ENCODE measurements at regions of chr4 and their contacts with region 1.

Region 1: DNA sequence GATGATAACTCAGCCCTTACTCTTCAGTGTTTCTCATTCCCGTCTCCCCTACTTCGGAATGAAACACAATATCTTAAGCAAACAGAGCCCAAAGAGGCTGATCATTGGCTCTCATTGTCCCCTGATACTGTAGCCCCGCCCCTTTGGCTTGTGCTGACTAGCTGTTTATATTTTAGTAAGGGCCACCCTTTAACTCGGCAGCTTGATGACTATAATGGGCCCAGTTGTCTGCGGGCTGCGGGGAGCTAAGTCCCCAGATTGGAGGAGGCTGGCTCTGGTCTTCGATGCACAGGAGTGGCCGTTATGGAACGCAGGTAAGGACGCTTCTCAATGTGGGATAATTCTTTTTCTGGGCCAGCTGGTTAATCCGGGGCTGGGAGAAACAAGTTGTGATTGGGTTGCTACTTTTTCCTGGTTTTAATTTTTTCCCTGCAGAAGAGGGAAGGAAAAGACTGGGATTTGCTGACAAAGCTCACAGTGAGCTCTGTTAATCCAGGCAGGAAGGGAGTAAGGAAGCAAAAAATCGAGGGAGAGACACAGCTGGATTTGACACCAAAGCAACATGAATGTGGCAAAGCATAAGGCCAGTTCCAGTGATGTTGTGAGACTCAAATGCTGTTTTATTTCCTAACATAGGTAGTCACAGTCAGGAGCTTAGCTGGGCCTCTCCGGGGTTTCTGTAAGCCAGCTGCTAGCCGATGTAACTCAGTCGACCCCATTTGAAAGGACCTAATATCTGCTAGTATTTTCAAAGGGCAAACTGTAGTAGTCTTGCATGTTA is at the start of gene TRIM2:
- DNase-seq: no peak
- H3K4me3 ChIP-seq: peak within 1 kb of the TSS in 1 of 2 donors; percentile 39
- H3K4me3 Mint-ChIP-seq: peak within 1 kb of the TSS; percentile 73 to 87 (median 82)
- H3K27ac ChIP-seq: peak within 1 kb of the TSS; percentile 37
- H3K27ac Mint-ChIP-seq: peak within 1 kb of the TSS; percentile 68 to 94 (median 89)
- H3K4me1 ChIP-seq: peaks cover 41% of the 10 kb centered on the region
- H3K4me1 Mint-ChIP-seq: peaks cover 23 to 48% (median 37%) of the 10 kb centered on the region in 4 donors
- H3K27me3 ChIP-seq: no peaks in the 10 kb centered on the region
- H3K27me3 Mint-ChIP-seq: no peaks in the 10 kb centered on the region
- total RNA-seq, gene TRIM2: 11.9 to 12.3 TPM

Region 2: DNA sequence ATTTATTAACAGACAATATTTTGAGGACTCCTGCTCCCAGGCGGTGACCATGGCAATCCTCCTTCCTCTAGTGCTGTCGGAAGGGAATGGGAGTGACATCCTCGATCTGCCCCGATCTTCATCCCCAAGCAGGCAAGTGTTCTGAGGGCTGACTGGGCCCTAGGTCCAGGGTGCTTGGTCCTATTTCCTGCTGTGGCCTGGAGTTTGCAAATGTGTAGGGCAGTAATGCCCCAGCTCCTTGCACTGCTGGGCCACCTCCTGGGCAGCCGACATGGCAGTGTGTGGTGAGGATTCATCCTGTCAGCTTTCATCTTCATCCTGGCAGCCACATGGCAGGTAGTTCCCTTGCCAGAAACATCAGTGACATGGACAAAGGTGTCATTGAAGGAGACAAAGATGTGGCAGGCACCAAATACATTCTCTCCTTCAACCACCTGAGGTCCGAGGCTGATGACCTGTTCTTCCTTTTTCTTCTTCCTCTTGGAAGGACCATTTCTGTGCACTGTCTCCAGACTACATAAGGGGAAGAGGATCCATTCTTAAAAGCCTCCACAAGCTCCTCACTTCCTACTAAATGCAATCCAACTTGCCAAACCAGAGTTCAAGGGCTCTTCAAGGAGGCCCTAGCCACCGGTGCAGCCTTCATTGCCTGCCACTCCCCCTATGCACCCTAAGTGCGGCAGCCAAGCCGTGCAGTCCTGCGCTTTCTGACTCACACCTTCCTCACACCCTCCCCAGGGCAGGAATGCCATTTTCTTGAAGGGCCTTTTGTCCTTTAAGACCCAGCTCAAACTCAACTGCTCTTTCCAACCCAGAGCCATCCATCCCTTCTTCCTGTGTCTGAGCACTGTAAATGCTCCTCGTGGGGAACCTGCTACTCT is 590.4 kb before region 1 on chr4:
- CTCF ChIA-PET with region 1: no interaction called
- POLR2A ChIA-PET with region 1: no interaction called
- intact Hi-C with region 1: no loop called
- DNase-seq: no peak
- H3K4me3 ChIP-seq: no peak overlapping the region
- H3K4me3 Mint-ChIP-seq: no peak overlapping the region
- H3K27ac ChIP-seq: no peak overlapping the region
- H3K27ac Mint-ChIP-seq: no peak overlapping the region
- H3K4me1 ChIP-seq: no peaks in the 10 kb centered on the region
- H3K4me1 Mint-ChIP-seq: peaks cover 0 to 8% (median under 1%) of the 10 kb centered on the region in 4 donors
- H3K27me3 ChIP-seq: no peaks in the 10 kb centered on the region
- H3K27me3 Mint-ChIP-seq: peaks cover 2 to 8% of the 10 kb centered on the region in 2 donors

Region 3: DNA sequence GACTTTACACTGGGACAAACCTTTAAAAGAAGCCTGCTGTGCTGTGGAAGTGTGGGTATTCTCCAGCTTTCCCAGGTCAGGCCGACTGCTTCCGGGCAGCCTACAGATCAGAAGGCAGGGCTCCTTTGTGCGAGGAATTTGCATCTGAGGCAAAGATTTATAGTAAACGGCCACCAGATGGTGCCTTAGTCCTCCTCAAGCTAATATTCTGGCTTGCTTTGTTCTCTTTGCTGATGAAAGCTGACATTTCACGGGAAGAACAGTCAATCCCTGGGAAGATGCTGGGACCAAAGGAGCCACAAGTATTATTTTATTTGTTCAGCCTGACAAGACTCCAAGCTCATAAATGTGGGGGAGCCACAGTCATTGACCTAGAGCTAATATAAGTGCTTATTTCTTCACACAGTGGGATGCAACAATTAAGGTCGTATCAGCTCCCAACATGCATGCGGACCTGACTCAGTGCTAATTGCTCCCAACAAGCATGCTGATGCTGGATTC is 120.9 kb before region 1 on chr4:
- CTCF ChIA-PET with region 1: no interaction called
- POLR2A ChIA-PET with region 1: no interaction called
- intact Hi-C with region 1: no loop called
- DNase-seq: peak; percentile 41 to 62 (median 56)
- H3K4me3 ChIP-seq: no peak overlapping the region
- H3K4me3 Mint-ChIP-seq: peak overlapping the region in 6 of 8 donors; percentile 1 to 83 (median 64)
- H3K27ac ChIP-seq: no peak overlapping the region
- H3K27ac Mint-ChIP-seq: peak overlapping the region in 5 of 7 donors; percentile 52 to 88 (median 65)
- H3K4me1 ChIP-seq: peaks cover 57% of the 10 kb centered on the region
- H3K4me1 Mint-ChIP-seq: peaks cover 30 to 56% (median 43%) of the 10 kb centered on the region in 4 donors
- H3K27me3 ChIP-seq: no peaks in the 10 kb centered on the region
- H3K27me3 Mint-ChIP-seq: peaks cover 0 to 3% of the 10 kb centered on the region in 2 donors

Region 4: DNA sequence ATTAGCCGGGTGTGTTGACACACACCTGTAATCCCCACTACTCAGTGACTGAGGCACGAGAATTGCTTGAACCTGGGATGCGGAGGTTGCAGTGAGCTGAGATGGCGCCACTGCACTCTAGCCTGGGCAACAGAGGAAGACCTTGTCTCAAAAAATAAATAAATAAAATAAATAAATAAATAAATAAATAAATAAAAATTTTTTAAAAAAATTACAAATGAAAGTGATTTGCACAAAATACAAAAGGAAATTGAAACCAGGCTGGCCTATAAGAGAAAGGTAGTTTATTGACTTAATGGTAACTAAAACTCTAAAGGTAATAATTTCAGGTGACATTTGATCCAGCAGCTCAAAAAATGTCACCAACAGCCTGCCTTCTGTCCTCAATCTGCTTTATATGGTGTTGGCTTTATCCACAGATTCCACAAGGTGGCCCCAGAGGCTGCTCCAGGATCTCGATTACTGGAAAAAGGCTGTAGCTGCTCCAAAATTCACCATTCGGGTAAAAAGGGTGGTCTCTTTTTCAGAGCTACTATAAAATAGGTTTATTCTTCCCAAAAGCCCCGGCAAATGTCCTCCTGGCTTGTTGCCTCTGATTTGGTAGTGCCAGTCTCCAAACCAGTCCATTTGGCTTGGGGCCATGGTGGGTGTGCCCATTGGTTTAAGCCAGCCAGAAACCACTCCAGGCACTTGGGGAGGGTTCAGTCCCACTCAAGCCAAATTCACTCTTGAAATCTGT is 61.6 kb before region 1 on chr4:
- CTCF ChIA-PET with region 1: interaction called, 3 read pairs
- POLR2A ChIA-PET with region 1: no interaction called
- intact Hi-C with region 1: loop called (anchors 1 kb)
- DNase-seq: peak; percentile 63 to 68 (median 64)
- H3K4me3 ChIP-seq: no peak overlapping the region
- H3K4me3 Mint-ChIP-seq: no peak overlapping the region
- H3K27ac ChIP-seq: no peak overlapping the region
- H3K27ac Mint-ChIP-seq: no peak overlapping the region
- H3K4me1 ChIP-seq: peaks cover 4% of the 10 kb centered on the region
- H3K4me1 Mint-ChIP-seq: peaks cover 0 to 12% (median 5%) of the 10 kb centered on the region in 4 donors
- H3K27me3 ChIP-seq: no peaks in the 10 kb centered on the region
- H3K27me3 Mint-ChIP-seq: no peaks in the 10 kb centered on the region

Region 5: DNA sequence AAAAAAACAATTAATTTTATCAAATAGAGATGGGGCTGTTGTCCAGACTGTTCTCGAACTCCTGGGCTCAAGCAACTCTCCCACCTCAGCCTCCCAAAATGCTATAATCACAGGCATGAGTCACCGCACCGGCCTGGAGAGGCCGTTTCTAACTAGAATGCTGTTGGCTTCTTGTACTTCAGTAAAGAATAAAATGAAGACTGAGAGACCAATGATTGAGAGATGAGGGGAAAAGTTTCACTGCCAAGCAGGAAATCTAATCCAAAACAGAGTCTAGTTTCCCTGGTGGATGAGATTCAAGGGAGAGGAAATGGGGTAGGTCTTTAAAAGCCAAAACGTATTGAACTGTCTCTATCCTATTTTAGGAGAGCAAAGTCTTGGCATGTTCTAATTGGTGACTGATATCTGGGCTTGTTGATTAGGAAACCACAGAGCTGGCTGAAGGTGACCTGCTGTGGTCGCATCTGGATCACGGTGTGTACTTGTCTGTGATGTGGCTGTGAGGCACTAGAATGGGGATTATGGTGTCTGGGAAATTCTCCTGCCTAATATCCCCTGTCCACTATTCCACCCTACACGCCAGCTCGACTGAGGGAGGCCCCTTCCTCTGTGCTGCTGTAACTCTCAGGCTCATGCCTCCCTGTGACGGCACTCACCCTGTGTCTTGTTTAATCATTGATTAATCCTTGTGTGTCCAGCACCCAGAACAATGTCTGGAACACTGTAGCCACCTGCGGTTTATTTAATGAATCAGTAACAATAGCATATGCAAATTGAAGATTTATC is 15.2 kb before region 1 on chr4:
- CTCF ChIA-PET with region 1: no interaction called
- POLR2A ChIA-PET with region 1: no interaction called
- intact Hi-C with region 1: no loop called
- DNase-seq: no peak
- H3K4me3 ChIP-seq: no peak overlapping the region
- H3K4me3 Mint-ChIP-seq: no peak overlapping the region
- H3K27ac ChIP-seq: no peak overlapping the region
- H3K27ac Mint-ChIP-seq: peak overlapping the region in 2 of 7 donors; percentile 22 to 38
- H3K4me1 ChIP-seq: no peaks in the 10 kb centered on the region
- H3K4me1 Mint-ChIP-seq: peaks cover 0 to 3% (median under 1%) of the 10 kb centered on the region in 4 donors
- H3K27me3 ChIP-seq: no peaks in the 10 kb centered on the region
- H3K27me3 Mint-ChIP-seq: no peaks in the 10 kb centered on the region

Region 6: DNA sequence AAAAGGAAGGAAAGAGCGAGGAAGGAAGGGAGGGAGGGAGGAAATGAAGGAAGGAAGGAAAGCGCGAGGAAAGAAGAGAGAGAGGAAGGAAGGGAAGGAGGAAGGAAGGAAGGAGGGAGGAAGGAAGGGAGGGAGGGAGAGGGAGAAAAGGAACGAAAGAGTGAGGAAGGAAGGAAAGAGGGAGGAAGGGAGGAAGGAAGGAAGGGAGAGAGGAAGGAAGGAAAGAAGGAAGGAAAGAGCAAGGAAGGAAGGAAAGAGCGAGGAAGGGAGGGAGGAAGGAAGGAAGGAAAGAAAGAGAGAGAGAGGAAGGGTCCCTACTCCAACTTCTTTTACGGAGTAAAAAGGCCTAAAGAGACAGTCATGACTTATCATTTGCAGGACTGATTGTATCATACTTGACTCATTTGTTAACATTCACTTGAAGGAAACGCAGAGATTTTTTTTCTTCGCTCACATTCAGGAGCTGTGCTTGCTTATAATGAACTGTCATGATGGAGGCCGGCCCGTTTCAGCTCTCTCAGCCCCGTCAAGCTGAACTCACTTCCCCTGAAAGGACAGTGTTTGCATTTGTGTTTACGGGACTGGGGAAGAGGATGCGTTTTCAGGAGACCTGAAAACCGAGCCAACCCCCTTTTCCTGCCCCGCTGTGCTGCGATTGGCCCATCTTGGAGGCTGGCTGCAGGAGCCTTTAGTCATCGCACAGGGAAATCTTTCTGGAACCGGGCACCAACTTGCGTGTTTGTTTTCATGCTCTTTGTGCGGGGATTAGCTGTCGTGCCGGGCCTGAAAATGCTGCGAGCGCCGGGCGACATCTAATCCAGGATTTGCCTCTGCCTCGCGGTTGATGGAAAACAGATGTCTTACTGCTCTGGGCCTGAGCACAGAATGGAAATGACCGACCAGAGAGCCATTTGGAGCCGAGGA is 17.6 kb after region 1 on chr4:
- CTCF ChIA-PET with region 1: interaction called, 3 read pairs
- POLR2A ChIA-PET with region 1: interaction called, 5 read pairs
- intact Hi-C with region 1: loop called (anchors 1 kb)
- DNase-seq: peak; percentile 19 to 49 (median 41)
- H3K4me3 ChIP-seq: peak overlapping the region; percentile 24 to 62
- H3K4me3 Mint-ChIP-seq: peak overlapping the region; percentile 87 to 94 (median 92)
- H3K27ac ChIP-seq: peak overlapping the region; percentile 56
- H3K27ac Mint-ChIP-seq: peak overlapping the region; percentile 73 to 91 (median 88)
- H3K4me1 ChIP-seq: peaks cover 36% of the 10 kb centered on the region
- H3K4me1 Mint-ChIP-seq: peaks cover 30 to 51% (median 38%) of the 10 kb centered on the region in 4 donors
- H3K27me3 ChIP-seq: peaks cover 3% of the 10 kb centered on the region
- H3K27me3 Mint-ChIP-seq: no peaks in the 10 kb centered on the region

Region 7: GRCh38 chr4:153249199-153250041 is 45.0 kb after region 1 on chr4:
- CTCF ChIA-PET with region 1: interaction called, 3 read pairs
- POLR2A ChIA-PET with region 1: interaction called, 18 read pairs
- intact Hi-C with region 1: no loop called
- DNase-seq: peak; percentile 86 to 90 (median 87)
- H3K4me3 ChIP-seq: peak overlapping the region; percentile 63 to 64
- H3K4me3 Mint-ChIP-seq: peak overlapping the region; percentile 89 to 95 (median 94)
- H3K27ac ChIP-seq: peak overlapping the region; percentile 73
- H3K27ac Mint-ChIP-seq: peak overlapping the region; percentile 89 to 97 (median 97)
- H3K4me1 ChIP-seq: peaks cover 17% of the 10 kb centered on the region
- H3K4me1 Mint-ChIP-seq: peaks cover 17 to 43% (median 31%) of the 10 kb centered on the region in 4 donors
- H3K27me3 ChIP-seq: no peaks in the 10 kb centered on the region
- H3K27me3 Mint-ChIP-seq: peaks cover 0 to 2% of the 10 kb centered on the region in 2 donors

Region 8: DNA sequence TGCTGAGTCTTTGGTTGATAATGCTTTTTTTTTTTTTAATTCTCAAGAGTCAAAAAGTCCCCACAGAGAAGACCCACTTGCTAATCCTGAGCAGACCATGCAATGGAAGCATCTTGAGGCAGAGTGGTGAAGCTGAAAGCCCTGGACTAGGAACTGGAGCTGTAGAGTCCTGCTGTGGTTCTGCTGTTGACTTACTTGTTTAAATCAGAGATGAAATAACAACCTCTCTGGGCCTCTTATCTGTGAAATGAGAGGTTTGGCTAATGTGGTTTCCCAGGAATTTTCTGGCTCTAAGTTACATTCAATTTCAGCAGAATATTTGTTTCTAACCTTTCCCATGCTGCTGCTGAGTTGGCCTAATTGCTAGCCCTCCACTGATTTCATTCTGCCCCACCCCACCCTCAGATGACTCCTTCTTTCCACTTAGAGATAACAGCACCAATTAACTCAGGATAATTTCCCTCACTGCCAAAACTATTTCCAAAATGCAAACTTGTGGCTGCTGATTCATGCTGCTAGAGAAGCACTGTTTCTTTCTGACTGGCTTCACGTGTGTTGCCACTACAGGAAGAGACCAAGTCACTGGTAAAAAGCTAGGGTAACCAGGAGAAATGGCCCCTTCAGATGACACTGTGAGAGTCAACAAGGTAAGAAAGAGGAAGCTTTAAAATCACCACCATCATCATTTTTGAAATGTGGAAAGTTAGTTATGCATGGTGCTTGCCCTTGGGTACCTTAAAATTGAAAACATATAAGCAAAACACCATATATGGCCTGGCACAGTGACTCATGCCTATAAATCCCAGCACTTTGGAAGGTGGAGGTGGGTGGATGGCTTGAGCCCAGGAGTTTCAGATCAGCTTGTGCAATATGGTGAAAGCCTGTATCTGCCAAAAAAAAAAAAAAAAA is 960.7 kb after region 1 on chr4:
- CTCF ChIA-PET with region 1: no interaction called
- POLR2A ChIA-PET with region 1: no interaction called
- intact Hi-C with region 1: no loop called
- DNase-seq: no peak
- H3K4me3 ChIP-seq: no peak overlapping the region
- H3K4me3 Mint-ChIP-seq: no peak overlapping the region
- H3K27ac ChIP-seq: no peak overlapping the region
- H3K27ac Mint-ChIP-seq: no peak overlapping the region
- H3K4me1 ChIP-seq: no peaks in the 10 kb centered on the region
- H3K4me1 Mint-ChIP-seq: no peaks in the 10 kb centered on the region
- H3K27me3 ChIP-seq: no peaks in the 10 kb centered on the region
- H3K27me3 Mint-ChIP-seq: peaks cover 0 to 3% of the 10 kb centered on the region in 2 donors